IMR-90 (cell line): ENCODE measurements at regions of chr14 and their contacts with region 1.

Region 1: DNA sequence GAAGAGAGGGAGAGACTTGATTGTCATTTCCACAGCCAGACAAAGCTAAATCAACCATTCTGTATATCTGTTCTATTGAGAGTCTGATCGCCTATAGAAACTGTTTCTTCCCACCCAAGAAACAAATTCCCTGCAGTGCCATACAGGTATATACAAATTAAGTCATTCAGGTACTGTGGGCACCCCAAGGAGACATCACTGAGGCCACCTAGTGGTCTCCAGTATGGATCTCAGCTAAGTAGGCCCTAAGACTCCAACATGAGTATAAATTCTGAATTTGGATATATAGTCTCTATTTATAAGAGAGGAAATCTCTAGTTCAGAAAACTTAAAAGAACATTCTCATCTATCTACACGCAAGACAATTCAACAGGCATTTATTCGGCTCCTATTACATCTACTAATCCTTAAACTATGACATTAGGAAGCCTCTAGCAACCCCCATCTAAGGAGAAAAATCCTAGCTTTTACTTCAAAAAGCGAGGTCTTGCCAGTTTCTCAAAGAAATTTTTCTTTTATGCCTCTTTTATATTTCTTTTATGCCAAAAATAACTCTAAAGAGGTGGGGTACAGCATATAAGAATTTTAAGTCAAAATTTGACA is 62.6 kb downstream of the DCAF5 start:
- DNase-seq: peak; percentile 55
- ATAC-seq: 0 out of 2 replicates have a peak, but pooled peaks have one; percentile 19
- H3K4me3 ChIP-seq: no peak overlapping the region
- H3K27ac ChIP-seq: no peak overlapping the region
- H3K4me1 ChIP-seq: peaks cover 20% of the 10 kb centered on the region
- H3K27me3 ChIP-seq: no peaks in the 10 kb centered on the region
- CTCF ChIP-seq: peak; percentile 65
- POLR2A ChIP-seq: no peak
- RAD21 ChIP-seq: peak; percentile 75

Region 2: DNA sequence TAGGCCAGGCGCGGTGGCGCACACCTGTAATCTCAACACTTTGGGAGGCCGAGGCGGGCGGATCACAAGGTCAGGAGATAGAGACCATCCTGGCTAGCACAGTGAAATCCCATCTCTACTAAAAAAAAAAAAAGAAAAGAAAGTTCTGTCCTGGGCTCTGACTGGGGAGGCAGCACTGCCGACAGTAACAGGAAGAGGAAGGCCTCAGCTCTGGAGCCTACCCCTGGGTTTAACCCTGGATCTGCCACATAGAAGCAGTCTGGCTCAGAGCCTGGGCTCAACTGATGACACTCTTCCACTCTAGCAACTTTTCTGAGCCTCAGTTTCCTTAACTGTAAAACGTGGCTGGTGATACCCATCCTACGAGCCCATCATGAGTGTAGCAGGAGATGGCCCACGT is 171.7 kb before region 1 on chr14:
- CTCF ChIA-PET with region 1: no interaction called
- POLR2A ChIA-PET with region 1: no interaction called
- dilution Hi-C with region 1: no loop called
- in situ Hi-C with region 1: no loop called
- intact Hi-C with region 1: no loop called
- DNase-seq: no peak
- ATAC-seq: no peak
- H3K4me3 ChIP-seq: no peak overlapping the region
- H3K27ac ChIP-seq: no peak overlapping the region
- H3K4me1 ChIP-seq: peaks cover 20% of the 10 kb centered on the region
- H3K27me3 ChIP-seq: no peaks in the 10 kb centered on the region
- CTCF ChIP-seq: no peak
- POLR2A ChIP-seq: no peak
- RAD21 ChIP-seq: no peak

Region 3: DNA sequence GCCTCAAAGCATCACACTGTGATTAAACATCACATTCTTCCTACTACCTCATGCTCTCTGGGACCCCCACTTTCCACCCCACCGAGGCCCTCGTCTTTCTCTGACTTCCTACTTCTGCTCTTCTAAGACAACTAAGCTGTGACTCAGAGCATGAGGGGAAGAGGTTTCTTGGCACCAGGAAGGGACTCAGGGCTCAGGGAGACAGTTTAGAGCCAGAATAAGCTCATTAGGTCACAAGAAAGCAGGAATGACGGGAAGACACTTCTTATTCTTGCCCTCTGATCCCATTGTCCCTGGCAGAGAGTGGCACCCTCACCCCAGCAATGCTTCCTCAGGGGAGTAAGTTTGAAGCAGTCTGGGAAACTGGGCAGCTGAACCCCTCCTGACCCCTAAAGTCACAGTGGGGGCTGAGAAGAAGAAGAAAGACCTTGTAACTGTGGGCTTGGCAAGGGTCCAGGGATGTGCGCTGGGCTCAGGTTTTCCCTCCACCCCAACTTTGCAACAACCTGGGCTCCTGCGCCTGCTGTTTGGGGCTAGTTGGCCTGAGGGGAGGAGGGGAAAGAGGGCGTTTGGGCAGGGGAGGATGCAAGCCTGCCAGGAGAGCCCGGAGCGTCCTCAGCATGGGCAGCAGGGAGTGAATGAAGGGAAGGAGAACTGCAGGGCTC is 46.6 kb before region 1 on chr14:
- CTCF ChIA-PET with region 1: no interaction called
- POLR2A ChIA-PET with region 1: no interaction called
- dilution Hi-C with region 1: no loop called
- in situ Hi-C with region 1: no loop called
- intact Hi-C with region 1: loop called (anchors 10 kb)
- DNase-seq: peak; percentile 77
- ATAC-seq: no peak
- H3K4me3 ChIP-seq: no peak overlapping the region
- H3K27ac ChIP-seq: peak overlapping the region; percentile 25
- H3K4me1 ChIP-seq: peaks cover 40% of the 10 kb centered on the region
- H3K27me3 ChIP-seq: no peaks in the 10 kb centered on the region
- CTCF ChIP-seq: no peak
- POLR2A ChIP-seq: no peak
- RAD21 ChIP-seq: no peak

Region 4: GRCh38 chr14:69161590-69161989 is 71.3 kb after region 1 on chr14:
- CTCF ChIA-PET with region 1: no interaction called
- POLR2A ChIA-PET with region 1: no interaction called
- dilution Hi-C with region 1: no loop called
- in situ Hi-C with region 1: no loop called
- intact Hi-C with region 1: no loop called
- DNase-seq: no peak
- ATAC-seq: no peak
- H3K4me3 ChIP-seq: no peak overlapping the region
- H3K27ac ChIP-seq: no peak overlapping the region
- H3K4me1 ChIP-seq: no peaks in the 10 kb centered on the region
- H3K27me3 ChIP-seq: peaks cover 3% of the 10 kb centered on the region; the same call in 1 of the 2 replicates
- CTCF ChIP-seq: no peak
- POLR2A ChIP-seq: no peak
- RAD21 ChIP-seq: no peak

Region 5: GRCh38 chr14:69299286-69300035 is 209.2 kb after region 1 on chr14:
- CTCF ChIA-PET with region 1: no interaction called
- POLR2A ChIA-PET with region 1: no interaction called
- dilution Hi-C with region 1: no loop called
- in situ Hi-C with region 1: no loop called
- intact Hi-C with region 1: no loop called
- DNase-seq: no peak
- ATAC-seq: peak; percentile 32; the same call in 1 of the 2 replicates
- H3K4me3 ChIP-seq: no peak overlapping the region
- H3K27ac ChIP-seq: no peak overlapping the region
- H3K4me1 ChIP-seq: no peaks in the 10 kb centered on the region
- H3K27me3 ChIP-seq: peaks cover 48% of the 10 kb centered on the region
- CTCF ChIP-seq: 0 out of 2 replicates have a peak, but pooled peaks have one; percentile 16
- POLR2A ChIP-seq: no peak
- RAD21 ChIP-seq: peak; percentile 36